ENCODE measurements at regions of chr17 and their contacts with region 1.

Region 1: DNA sequence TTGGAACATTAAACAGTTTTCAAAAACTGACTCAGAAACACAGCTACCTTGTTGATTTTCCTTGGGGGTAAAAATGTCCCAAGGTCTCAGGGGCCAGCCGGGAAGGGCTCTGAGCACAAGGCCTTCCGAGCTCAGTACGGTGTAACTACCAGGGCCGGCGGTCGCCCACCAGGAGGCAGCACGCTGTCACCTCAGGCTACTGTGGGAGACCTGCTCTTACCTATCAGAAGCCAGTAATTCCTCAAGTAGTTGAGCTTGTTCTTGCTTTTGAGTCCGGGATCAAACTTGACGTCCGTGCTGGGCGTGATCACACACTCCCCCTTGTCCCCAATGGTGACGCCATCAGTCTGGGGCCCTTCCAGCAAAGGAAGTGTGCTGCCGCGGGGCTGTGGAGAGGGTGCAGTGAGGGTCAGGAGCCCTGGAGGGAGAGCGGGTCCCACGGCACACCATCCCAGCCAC is 43.4 kb upstream of the ICAM2 start:
- DNase-seq: peak; percentile 84
- ATAC-seq: peak; percentile 99
- H3K4me3 Mint-ChIP-seq: peak overlapping the region; percentile 49
- H3K27ac Mint-ChIP-seq: peak overlapping the region; percentile 43; the same call in 1 of the 2 replicates
- H3K4me1 Mint-ChIP-seq: peaks cover 12% of the 10 kb centered on the region
- H3K27me3 Mint-ChIP-seq: peaks cover 4% of the 10 kb centered on the region; the same call in 1 of the 2 replicates
- CTCF ChIP-seq: peak; percentile 54; the same call in 1 of the 2 replicates

Region 2: DNA sequence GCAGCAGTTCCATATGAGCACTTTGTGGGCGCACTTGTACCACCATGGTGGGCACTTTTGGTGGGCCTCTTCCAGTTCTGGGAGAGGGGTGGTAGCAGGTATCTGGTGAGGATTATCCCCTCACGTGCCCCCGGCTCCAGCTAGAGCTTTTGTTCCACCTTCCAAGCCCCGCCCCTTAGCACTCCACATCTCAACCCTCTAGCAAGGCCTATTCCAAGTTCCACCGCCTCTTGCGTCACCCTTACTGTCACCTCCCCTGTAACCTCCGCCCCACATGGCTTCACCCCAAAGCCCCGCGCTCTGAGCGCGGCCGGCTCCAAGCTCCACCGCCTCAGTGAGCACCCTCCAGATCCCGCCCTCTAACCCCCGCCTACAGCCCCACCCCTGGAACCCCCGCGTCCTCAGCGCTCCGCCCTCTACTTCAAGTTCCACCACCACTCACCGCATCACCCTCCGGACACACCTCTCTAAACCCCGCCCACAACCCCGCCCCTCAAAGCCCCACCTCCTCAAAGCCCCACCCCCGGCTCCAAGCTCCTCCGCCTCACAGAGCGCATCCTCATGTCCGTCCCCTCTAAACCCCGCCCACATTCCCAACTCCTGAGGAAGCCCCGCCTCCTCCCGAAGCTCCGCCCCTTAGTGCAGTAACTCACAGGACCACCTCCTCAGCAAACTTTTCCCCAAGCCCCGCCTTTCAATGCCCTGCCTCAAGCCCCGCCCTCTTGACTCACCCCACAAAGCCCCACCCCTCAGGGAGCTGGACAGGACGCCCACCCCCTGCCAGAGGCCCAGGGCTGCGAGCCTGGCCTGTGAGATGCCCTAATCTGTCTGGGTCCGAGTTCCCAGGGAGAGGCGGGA is 102.2 kb before region 1 on chr17:
- CTCF ChIA-PET with region 1: interaction called, 10 read pairs
- POLR2A ChIA-PET with region 1: interaction called, 4 read pairs
- DNase-seq: peak; percentile 100
- ATAC-seq: peak; percentile 90
- H3K4me3 Mint-ChIP-seq: peak overlapping the region; percentile 76
- H3K27ac Mint-ChIP-seq: 0 out of 2 replicates have a peak overlapping the region, but pooled peaks have one; percentile 70
- H3K4me1 Mint-ChIP-seq: peaks cover 20% of the 10 kb centered on the region
- H3K27me3 Mint-ChIP-seq: no peaks in the 10 kb centered on the region; the same call in 1 of the 2 replicates
- CTCF ChIP-seq: no peak

Region 3: GRCh38 chr17:64048805-64049204 is 15.0 kb before region 1 on chr17:
- CTCF ChIA-PET with region 1: interaction called, 14 read pairs
- POLR2A ChIA-PET with region 1: no interaction called
- DNase-seq: no peak
- ATAC-seq: no peak
- H3K4me3 Mint-ChIP-seq: no peak overlapping the region
- H3K27ac Mint-ChIP-seq: no peak overlapping the region
- H3K4me1 Mint-ChIP-seq: no peaks in the 10 kb centered on the region
- H3K27me3 Mint-ChIP-seq: no peaks in the 10 kb centered on the region
- CTCF ChIP-seq: no peak

Region 4: DNA sequence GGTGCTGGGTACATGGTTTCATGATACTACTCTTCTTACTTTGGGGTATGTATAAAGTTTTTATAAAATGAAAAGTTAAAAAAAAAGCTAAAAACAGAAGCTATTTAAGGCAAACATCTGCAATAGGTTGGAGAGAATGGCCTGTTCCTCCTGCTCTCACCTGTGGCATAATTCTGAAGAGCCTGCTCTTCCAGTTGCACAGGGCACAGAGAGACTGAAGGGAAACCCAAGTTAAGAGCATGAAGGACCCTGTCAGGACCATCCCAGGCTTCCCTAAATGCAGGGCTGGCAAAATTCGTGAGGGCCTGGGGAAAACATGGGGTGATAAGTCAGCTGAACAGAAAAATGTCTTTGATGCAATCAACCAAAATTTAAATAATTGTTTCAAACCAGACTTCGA is 23.8 kb after region 1 on chr17:
- CTCF ChIA-PET with region 1: interaction called, 17 read pairs
- POLR2A ChIA-PET with region 1: no interaction called
- DNase-seq: no peak
- ATAC-seq: no peak
- H3K4me3 Mint-ChIP-seq: no peak overlapping the region
- H3K27ac Mint-ChIP-seq: no peak overlapping the region
- H3K4me1 Mint-ChIP-seq: peaks cover 4% of the 10 kb centered on the region
- H3K27me3 Mint-ChIP-seq: no peaks in the 10 kb centered on the region
- CTCF ChIP-seq: no peak

Region 5: DNA sequence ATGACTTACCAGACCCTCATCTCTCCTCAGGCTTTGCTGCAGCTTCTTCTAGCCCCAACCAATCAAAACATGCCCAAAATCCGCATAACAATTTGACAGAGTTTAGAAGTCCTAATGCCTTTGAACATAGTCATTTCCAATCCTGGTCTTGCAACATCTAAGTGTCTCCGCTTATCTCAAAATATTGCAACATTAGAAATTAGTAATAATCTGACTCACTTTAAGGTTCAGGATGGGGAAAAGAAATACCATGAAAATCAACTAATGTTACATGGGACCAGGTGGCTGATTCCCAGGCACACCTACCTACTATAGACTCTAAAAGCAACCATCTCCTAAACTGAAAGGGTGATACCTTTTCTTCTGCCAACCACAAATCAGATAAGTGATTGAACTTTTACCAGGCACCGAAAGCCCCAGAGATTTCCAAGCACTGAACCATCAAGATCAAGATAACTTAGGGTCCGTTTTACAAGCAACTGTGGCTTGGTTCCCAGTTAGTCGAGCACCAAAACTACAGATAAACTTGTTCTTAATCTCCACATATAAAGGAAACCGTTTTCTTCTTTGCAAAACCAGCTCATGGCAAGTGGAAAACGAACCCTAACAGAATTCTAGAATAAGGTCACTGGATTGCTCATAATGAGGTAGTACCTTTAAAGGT is 52.2 kb after region 1 on chr17:
- CTCF ChIA-PET with region 1: interaction called, 21 read pairs
- POLR2A ChIA-PET with region 1: no interaction called
- DNase-seq: no peak
- ATAC-seq: no peak
- H3K4me3 Mint-ChIP-seq: no peak overlapping the region
- H3K27ac Mint-ChIP-seq: no peak overlapping the region
- H3K4me1 Mint-ChIP-seq: no peaks in the 10 kb centered on the region
- H3K27me3 Mint-ChIP-seq: no peaks in the 10 kb centered on the region
- CTCF ChIP-seq: no peak

Region 6: DNA sequence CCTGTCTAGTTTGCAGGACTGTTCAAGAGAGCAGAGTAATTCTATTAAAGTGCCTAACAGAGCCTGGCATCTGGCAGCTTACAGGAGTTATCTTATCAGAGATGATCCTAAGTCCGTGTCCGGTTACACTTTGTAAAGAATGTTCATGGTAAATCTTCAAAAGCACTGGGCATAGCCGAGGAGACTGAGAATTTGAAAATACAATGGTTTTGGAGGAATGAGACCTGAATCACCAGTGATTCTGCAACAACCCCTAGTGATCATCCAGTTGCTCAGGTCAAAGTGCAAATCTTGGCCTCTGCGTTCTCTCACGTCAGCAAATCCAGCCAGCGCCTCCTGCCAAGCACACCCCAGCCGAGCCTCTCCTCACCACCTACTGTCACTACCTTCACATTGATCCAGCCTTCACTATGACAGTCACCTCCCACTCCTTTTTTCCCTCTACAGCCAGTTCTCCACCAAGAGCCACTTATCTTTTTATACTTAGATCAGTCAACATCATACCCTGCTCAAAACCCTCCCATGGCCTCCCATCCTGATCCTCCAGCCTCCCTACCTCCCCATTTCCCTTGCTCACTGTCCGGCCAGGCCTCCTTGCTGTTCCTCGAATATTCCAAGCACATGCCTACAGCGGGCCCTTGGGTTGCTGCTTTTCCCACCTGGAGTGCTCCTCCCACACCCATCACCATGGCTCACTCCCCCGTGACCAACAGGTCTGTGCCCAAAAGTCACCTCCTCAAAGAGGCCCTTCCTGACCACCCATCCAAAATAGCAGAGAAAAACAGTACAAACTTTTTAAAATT is 123.5 kb after region 1 on chr17:
- CTCF ChIA-PET with region 1: no interaction called
- POLR2A ChIA-PET with region 1: no interaction called
- DNase-seq: no peak
- ATAC-seq: no peak
- H3K4me3 Mint-ChIP-seq: no peak overlapping the region
- H3K27ac Mint-ChIP-seq: no peak overlapping the region
- H3K4me1 Mint-ChIP-seq: no peaks in the 10 kb centered on the region
- H3K27me3 Mint-ChIP-seq: no peaks in the 10 kb centered on the region
- CTCF ChIP-seq: no peak

Region 7: DNA sequence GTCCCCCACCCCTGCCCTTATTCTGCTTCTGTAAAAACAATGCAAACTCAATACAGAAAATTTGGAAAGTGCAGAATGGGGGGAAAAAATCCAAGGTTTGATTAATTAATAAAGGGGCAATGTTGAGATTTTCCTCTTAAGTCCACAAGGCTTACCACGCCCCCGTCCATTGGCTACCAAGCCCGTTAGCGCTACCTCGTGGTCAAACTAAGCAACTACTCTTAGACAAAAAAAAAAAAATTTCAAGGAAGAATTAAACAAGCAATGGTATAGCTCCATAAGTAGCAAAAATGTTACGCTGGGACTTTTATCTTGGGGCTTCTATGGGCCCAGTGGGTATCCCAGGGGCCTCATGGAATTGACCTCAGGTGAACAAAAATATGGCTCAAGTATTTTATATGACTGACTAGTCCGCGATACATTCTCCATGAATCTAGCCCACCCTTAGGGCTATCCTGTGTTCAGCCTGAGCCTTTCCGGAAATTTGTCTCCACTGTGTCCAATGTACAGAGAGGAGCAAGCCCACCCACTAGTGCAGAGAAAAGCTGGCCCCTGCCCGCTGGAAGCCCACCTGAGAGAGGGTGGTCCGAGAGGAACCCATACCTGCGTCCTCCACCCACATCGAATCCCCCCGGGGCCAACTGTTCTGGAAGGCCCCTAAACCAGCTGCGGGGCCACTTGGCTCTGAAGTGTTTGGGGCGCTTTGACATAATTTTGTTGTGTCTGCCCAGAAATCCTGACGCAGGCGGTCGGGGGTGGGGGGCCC is 218.3 kb after region 1 on chr17:
- CTCF ChIA-PET with region 1: interaction called, 16 read pairs
- POLR2A ChIA-PET with region 1: no interaction called
- DNase-seq: peak; percentile 49
- ATAC-seq: peak; percentile 71
- H3K4me3 Mint-ChIP-seq: no peak overlapping the region
- H3K27ac Mint-ChIP-seq: no peak overlapping the region
- H3K4me1 Mint-ChIP-seq: no peaks in the 10 kb centered on the region; the same call in 1 of the 2 replicates
- H3K27me3 Mint-ChIP-seq: no peaks in the 10 kb centered on the region
- CTCF ChIP-seq: peak; percentile 55